ENCODE measurements at regions of chr2 and their contacts with region 1.

Region 1: DNA sequence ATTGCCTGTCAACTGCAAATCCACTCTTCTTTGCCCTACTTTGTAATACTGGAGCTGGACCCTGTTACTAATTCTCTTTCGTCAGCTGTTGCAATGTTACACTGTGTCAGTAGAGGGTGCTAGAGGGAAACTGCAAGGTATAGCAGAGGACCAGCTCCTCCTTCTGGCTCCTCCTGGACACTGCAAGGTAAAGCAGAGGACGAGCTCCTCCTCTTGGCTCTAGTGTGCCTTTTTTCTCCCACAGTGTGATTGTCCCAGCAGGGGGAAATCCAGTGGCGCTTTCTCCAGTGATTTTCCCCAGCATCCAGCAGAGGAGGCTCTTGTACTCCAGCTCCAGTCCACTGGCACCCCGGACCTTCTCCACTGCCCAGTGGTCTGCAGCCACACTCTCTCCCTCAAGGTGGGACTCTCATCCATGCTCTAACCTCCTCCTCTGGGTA is 95.6 kb downstream of the CAPN13 start:
- DNase-seq: peak; percentile 86
- H3K4me3 ChIP-seq: peak overlapping the region in 1 of 2 experiments; percentile 14; a peak in 1 of 4 replicates
- H3K27ac ChIP-seq: no peak overlapping the region
- H3K4me1 ChIP-seq: peaks cover 0 to 3% of the 10 kb centered on the region in 2 experiments; a peak in 1 of 4 replicates
- H3K27me3 ChIP-seq: no peaks in the 10 kb centered on the region
- CTCF ChIP-seq: peak; percentile 99
- EP300 ChIP-seq: no peak
- RAD21 ChIP-seq: peak; percentile 91

Region 2: DNA sequence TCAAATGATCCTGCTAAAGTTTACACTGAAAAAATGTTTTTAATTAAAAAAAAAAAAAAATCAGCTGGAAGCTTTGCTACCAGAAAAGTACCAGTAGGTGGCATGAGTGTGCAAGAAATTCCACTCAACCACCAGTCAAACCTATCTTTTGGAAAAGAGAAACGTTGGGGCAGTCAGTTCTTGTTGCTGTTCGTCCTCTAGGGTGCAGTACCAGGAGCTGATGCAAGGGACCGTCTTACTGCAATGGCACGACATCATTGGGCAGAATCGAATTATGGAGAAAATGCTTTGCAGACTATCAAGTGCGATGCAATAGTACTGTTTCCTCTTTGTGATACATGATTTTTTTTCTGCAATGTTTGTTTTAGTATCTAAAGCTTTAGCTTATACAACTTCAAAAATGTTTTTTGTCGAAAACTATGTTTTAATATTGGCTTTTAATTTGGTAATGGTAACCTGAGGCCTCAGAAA is 546.6 kb before region 1 on chr2:
- CTCF ChIA-PET with region 1: interaction called, 530 read pairs
- POLR2A ChIA-PET with region 1: interaction called, 6 read pairs
- DNase-seq: peak; percentile 88
- H3K4me3 ChIP-seq: no peak overlapping the region; a peak in 1 of 4 replicates
- H3K27ac ChIP-seq: no peak overlapping the region
- H3K4me1 ChIP-seq: peaks cover 2 to 9% of the 10 kb centered on the region in 2 experiments; a peak in 3 of 4 replicates
- H3K27me3 ChIP-seq: no peaks in the 10 kb centered on the region
- CTCF ChIP-seq: peak; percentile 99
- EP300 ChIP-seq: peak in 1 of 2 experiments; percentile 26; a peak in 1 of 4 replicates
- RAD21 ChIP-seq: peak; percentile 97

Region 3: DNA sequence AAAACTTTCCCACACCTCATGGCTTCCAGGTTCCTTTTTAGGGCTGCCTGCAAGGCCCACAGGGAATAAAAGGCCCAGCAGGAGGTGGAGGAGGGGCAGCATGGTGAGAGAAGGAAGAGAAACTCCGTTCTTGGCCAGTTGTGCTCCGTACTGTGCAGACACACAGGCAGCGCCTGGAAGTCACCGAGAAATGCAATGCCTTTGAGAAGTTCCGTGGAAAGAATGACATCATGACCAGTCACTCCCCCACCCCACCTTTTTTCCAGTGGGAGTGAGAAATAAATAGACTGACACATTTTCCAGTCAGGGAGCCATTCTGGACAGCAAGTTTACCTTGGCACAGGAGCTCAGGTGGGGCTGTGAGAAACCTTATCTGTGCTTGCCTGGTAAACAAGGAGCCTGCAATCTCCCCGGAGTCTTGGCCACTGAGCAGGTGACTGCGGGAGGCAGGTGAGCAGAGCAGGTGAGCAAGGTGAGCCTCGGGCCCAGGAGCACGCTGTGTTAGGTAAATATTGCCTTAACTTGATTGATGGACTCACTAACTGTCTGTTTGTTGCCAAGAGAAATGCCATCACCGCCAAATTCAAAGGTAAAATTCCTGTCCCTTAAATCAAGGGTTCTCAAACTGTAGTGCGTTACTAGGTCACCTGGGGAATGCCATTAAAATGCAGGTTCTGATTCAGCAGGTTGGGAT is 493.9 kb before region 1 on chr2:
- CTCF ChIA-PET with region 1: interaction called, 573 read pairs
- POLR2A ChIA-PET with region 1: no interaction called
- DNase-seq: no peak
- H3K4me3 ChIP-seq: no peak overlapping the region
- H3K27ac ChIP-seq: no peak overlapping the region
- H3K4me1 ChIP-seq: peaks cover 0 to 3% of the 10 kb centered on the region in 2 experiments; a peak in 2 of 4 replicates
- H3K27me3 ChIP-seq: no peaks in the 10 kb centered on the region
- CTCF ChIP-seq: no peak
- EP300 ChIP-seq: no peak
- RAD21 ChIP-seq: no peak

Region 4: GRCh38 chr2:30675758-30676157 is 35.9 kb before region 1 on chr2:
- CTCF ChIA-PET with region 1: no interaction called
- POLR2A ChIA-PET with region 1: no interaction called
- DNase-seq: no peak
- H3K4me3 ChIP-seq: no peak overlapping the region
- H3K27ac ChIP-seq: no peak overlapping the region
- H3K4me1 ChIP-seq: peaks cover 0 to 4% of the 10 kb centered on the region in 2 experiments; a peak in 1 of 4 replicates
- H3K27me3 ChIP-seq: no peaks in the 10 kb centered on the region
- CTCF ChIP-seq: no peak
- EP300 ChIP-seq: no peak
- RAD21 ChIP-seq: no peak

Region 5: DNA sequence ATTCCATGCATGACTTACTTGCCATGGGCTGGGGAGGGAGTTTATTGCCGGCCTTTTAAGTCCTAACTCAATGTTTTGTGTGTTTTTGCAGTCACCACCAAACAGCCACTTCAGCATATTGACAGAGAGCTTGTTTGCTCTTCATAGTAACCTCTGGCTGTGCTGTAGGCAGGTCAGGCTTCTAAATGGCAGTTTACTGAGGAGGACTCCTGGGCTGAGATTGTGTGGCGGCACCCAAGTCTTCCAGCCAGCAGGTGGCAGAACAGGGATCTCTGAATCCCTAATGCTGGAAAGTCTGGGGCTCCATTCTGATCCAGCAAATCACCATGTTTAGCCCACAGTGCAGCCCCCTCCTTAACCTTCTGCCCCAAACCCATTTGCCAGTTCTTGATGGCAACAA is 25.7 kb before region 1 on chr2:
- CTCF ChIA-PET with region 1: interaction called, 212 read pairs
- POLR2A ChIA-PET with region 1: no interaction called
- DNase-seq: peak; percentile 50
- H3K4me3 ChIP-seq: no peak overlapping the region; a peak in 1 of 4 replicates
- H3K27ac ChIP-seq: no peak overlapping the region
- H3K4me1 ChIP-seq: peaks cover 0 to 25% of the 10 kb centered on the region in 2 experiments; a peak in 1 of 4 replicates
- H3K27me3 ChIP-seq: no peaks in the 10 kb centered on the region
- CTCF ChIP-seq: peak; percentile 44
- EP300 ChIP-seq: no peak
- RAD21 ChIP-seq: peak; percentile 28; the same call in 1 of the 2 replicates

Region 6: GRCh38 chr2:30862054-30862651 is 150.5 kb after region 1 on chr2:
- CTCF ChIA-PET with region 1: interaction called, 291 read pairs
- POLR2A ChIA-PET with region 1: no interaction called
- DNase-seq: peak; percentile 83
- H3K4me3 ChIP-seq: peak overlapping the region in 1 of 2 experiments; percentile 43; a peak in 1 of 4 replicates
- H3K27ac ChIP-seq: peak overlapping the region in 1 of 2 experiments; percentile 62; a peak in 2 of 4 replicates
- H3K4me1 ChIP-seq: peaks cover 0 to 30% of the 10 kb centered on the region in 2 experiments; a peak in 2 of 4 replicates
- H3K27me3 ChIP-seq: no peaks in the 10 kb centered on the region
- CTCF ChIP-seq: peak; percentile 65
- EP300 ChIP-seq: no peak
- RAD21 ChIP-seq: peak; percentile 87

Region 7: GRCh38 chr2:31138037-31138962 is 426.6 kb after region 1 on chr2 and contains the start of gene GALNT14:
- CTCF ChIA-PET with region 1: interaction called, 168 read pairs
- POLR2A ChIA-PET with region 1: no interaction called
- DNase-seq: peak; percentile 98
- H3K4me3 ChIP-seq: peak within 1 kb of the TSS; percentile 55 to 64
- H3K27ac ChIP-seq: peak within 1 kb of the TSS in 1 of 2 experiments; percentile 68; a peak in 2 of 4 replicates
- H3K4me1 ChIP-seq: peaks cover 0 to 22% of the 10 kb centered on the region in 2 experiments; a peak in 1 of 4 replicates
- H3K27me3 ChIP-seq: peaks cover 57% of the 10 kb centered on the region
- CTCF ChIP-seq: peak; percentile 52
- EP300 ChIP-seq: peak in 1 of 2 experiments; percentile 16; a peak in 1 of 4 replicates
- RAD21 ChIP-seq: peak; percentile 67
- polyA plus RNA-seq, gene GALNT14: 1.6 and 1.8 TPM in 2 replicates

Region 8: DNA sequence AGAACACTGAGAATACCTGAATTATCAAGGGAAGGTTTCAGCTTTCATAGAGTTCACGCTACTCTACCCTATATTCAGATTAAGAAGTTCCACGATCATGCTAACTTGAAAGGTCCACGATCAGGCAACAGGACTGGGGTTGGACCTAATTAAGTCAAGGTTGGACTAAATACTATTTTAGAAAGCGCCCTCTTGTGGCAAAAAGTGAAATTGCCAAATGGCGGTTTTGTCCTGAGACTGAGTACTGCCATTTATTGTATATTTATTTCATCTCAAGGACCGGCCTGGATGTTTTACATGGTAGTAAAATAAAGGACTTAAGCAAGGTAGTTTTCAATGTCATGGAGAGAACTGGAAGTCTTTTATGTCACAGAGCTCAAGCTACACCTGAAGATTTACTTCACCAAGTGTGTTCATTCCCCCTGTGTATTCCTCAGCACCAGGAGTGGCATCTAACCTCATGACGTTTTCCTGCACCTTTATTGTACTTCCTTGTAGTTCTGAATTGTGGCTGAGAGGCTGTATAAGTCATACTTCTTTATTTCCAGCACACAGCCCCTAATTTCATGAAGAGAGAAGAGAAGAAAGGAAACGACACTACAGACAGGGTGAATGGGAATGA is 812.3 kb after region 1 on chr2:
- CTCF ChIA-PET with region 1: interaction called, 22 read pairs
- POLR2A ChIA-PET with region 1: no interaction called
- DNase-seq: peak; percentile 44
- H3K4me3 ChIP-seq: no peak overlapping the region; a peak in 1 of 4 replicates
- H3K27ac ChIP-seq: no peak overlapping the region
- H3K4me1 ChIP-seq: no peaks in the 10 kb centered on the region
- H3K27me3 ChIP-seq: peaks cover 20% of the 10 kb centered on the region; the same call in 1 of the 2 replicates
- CTCF ChIP-seq: peak; percentile 95
- EP300 ChIP-seq: no peak
- RAD21 ChIP-seq: peak; percentile 59